ENCODE measurements at regions of chrX and their contacts with region 1.

Region 1: DNA sequence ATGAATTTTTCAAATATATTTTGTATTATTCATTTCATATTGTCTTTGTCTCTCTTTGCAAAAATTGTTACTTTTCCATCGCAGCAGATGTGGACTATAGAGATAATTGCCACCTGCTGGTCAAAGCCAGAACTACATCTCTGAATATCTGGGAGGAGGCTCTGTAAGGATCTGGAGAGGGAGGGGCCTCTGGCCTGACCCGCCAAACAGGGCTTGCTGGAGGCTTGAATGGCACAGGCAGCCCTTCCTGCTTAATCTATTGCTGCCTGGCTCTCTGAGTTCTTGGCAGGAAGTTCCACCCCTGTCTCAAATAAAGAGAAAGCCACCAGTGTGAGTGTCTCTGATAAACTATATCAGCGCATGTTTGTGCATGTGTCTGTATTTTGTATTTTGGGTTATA is 132.4 kb downstream of the ZMAT1 start:
- DNase-seq: peak; percentile 91
- H3K4me3 Mint-ChIP-seq: peak overlapping the region; percentile 63
- H3K27ac Mint-ChIP-seq: no peak overlapping the region
- H3K4me1 Mint-ChIP-seq: peaks cover 2% of the 10 kb centered on the region
- H3K27me3 Mint-ChIP-seq: no peaks in the 10 kb centered on the region

Region 2: DNA sequence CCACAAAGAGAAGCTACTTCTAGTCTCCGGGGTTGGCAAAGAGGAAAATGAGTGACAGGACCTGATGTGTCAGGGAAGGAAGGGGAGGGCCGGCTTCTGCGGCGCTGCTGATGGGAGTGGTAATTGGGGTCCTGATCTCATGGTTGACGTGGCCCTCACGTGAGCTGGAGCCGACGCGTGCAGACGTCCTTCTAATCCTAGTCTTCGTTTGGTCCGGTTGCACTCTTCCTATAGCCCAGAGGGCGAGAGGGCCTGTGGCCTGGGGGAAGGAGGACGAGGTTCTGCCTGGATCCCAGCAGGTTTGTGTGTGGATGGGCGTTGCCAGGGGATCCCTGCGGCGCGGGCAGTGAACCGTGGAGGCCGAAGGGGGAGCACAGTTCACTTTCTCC is 249.0 kb before region 1 on chrX and contains the start of gene ARMCX1:
- CTCF ChIA-PET with region 1: no interaction called
- intact Hi-C with region 1: loop called (anchors 1 kb)
- DNase-seq: peak; percentile 61
- H3K4me3 Mint-ChIP-seq: peak within 1 kb of the TSS; percentile 76
- H3K27ac Mint-ChIP-seq: no peak within 1 kb of the TSS
- H3K4me1 Mint-ChIP-seq: peaks cover 9% of the 10 kb centered on the region
- H3K27me3 Mint-ChIP-seq: peaks cover 12% of the 10 kb centered on the region
- total RNA-seq, gene ARMCX1: 2.6 to 3.0 TPM

Region 3: GRCh38 chrX:101595739-101596419 is 203.5 kb before region 1 on chrX:
- CTCF ChIA-PET with region 1: interaction called, 4 read pairs
- intact Hi-C with region 1: loop called (anchors 5 kb)
- DNase-seq: peak; percentile 18
- H3K4me3 Mint-ChIP-seq: no peak overlapping the region
- H3K27ac Mint-ChIP-seq: no peak overlapping the region
- H3K4me1 Mint-ChIP-seq: no peaks in the 10 kb centered on the region
- H3K27me3 Mint-ChIP-seq: peaks cover 10% of the 10 kb centered on the region

Region 4: DNA sequence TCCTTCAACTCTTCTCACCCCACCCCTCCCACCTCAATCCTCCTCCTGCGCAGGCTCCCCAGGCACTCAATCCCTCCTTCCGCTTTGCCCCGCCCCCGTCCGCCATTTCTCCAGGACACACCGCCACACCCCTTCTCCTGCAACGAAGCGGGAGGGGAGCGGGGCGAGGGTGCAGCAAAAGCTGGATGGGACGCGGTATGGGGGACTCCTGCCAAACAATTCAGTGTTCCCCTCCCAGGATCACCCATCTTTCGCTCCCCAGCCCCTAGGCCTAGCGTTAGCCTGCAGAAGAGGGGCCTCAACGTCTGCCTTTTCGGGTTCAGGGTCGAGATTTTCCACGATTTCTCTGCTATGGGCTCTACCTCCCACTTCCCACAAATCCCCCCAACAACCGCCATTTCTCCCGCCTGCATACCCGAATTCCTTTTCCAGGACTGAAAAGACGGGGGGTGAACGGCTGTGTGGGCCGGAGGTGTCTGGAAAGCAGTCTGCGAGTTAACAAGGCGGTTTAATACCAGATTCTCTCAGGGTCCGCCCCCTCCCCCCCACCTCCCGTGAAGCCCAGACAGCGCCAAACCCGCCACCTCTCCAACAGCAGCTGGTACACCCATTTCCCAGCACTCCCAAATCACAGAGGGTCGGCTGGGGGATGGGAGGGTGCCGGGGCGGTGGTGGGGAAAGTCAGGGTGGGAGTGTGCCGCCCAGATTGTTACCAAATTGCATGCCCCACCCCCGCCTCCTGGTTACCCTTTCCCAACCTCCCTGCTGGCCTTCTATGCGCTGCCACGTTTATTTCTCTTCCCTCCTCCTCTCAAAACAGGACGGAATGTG is 140.5 kb before region 1 on chrX:
- CTCF ChIA-PET with region 1: no interaction called
- intact Hi-C with region 1: loop called (anchors 2 kb)
- DNase-seq: peak; percentile 77
- H3K4me3 Mint-ChIP-seq: peak overlapping the region; percentile 76
- H3K27ac Mint-ChIP-seq: peak overlapping the region; percentile 8
- H3K4me1 Mint-ChIP-seq: peaks cover 28% of the 10 kb centered on the region
- H3K27me3 Mint-ChIP-seq: no peaks in the 10 kb centered on the region

Region 5: DNA sequence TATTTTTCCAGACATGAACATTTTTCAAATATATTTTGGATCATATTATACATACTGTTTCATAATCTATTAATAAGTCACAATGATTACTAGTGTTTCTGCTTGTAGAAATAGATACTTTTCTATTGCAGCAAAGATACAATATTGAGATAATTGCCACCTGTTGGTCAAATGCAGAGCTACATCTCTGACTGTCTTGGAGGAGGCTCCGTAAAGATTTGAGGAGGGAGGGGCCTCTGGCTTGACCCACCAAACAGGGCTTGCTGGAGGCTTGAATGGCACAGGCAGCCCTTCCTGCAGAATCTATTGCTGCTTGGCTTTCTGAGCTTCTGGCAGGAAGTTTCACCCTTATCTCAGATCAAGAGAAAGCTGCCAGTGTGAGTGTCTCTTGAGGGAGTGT is 40.4 kb before region 1 on chrX:
- CTCF ChIA-PET with region 1: interaction called, 3 read pairs
- intact Hi-C with region 1: loop called (anchors 2 kb)
- DNase-seq: peak; percentile 31
- H3K4me3 Mint-ChIP-seq: no peak overlapping the region
- H3K27ac Mint-ChIP-seq: no peak overlapping the region
- H3K4me1 Mint-ChIP-seq: peaks cover 2% of the 10 kb centered on the region
- H3K27me3 Mint-ChIP-seq: no peaks in the 10 kb centered on the region

Region 6: DNA sequence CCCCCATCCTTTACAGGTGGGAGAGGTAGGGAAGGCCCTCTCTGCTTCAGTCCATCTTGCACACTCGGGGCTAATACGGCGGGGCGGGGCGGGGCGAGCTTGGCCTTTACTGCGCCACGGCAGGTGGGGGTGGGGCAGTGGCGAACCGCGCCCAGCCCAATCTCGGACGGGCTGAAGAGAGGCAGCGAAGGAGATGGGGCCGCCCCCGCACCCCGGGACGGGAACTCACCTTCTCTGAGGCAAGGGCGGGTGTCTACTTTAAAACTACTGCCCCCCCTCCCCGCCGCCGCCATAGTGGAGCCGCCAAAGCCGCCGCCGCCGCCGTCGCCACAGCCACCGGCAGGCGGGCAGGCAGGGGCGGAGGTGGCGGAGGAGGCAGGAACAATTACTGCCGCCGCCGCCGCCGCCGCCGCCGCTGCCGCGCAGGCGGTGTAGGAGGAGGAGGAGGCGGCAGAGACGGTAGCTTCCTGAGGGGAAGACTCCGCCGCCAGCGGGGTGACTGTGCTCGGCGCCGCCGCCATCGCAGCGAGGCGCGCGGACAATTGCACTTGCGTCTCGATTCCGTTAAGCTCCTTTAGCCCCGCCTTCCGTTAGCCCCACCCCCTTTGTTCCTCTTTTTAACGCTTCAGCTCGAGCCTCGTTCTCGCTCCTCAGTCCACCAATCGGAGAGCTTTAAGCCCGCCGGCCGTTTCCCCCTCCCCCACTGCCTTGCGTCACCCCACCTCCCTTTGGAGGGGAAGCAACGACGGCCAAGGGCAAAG is 132.3 kb after region 1 on chrX and contains the start of gene ZMAT1:
- CTCF ChIA-PET with region 1: no interaction called
- intact Hi-C with region 1: loop called (anchors 2 kb)
- DNase-seq: peak; percentile 96
- H3K4me3 Mint-ChIP-seq: peak within 1 kb of the TSS; percentile 92
- H3K27ac Mint-ChIP-seq: peak within 1 kb of the TSS; percentile 91
- H3K4me1 Mint-ChIP-seq: peaks cover 11% of the 10 kb centered on the region
- H3K27me3 Mint-ChIP-seq: no peaks in the 10 kb centered on the region
- total RNA-seq, gene ZMAT1: 2.7 to 2.8 TPM

Measured in activated naive CD4-positive, alpha-beta T cell treated with anti-CD3 and anti-CD28 coated beads for 36 hours (primary cell).